ENCODE measurements at regions of chr3 and their contacts with region 1.

Region 1: DNA sequence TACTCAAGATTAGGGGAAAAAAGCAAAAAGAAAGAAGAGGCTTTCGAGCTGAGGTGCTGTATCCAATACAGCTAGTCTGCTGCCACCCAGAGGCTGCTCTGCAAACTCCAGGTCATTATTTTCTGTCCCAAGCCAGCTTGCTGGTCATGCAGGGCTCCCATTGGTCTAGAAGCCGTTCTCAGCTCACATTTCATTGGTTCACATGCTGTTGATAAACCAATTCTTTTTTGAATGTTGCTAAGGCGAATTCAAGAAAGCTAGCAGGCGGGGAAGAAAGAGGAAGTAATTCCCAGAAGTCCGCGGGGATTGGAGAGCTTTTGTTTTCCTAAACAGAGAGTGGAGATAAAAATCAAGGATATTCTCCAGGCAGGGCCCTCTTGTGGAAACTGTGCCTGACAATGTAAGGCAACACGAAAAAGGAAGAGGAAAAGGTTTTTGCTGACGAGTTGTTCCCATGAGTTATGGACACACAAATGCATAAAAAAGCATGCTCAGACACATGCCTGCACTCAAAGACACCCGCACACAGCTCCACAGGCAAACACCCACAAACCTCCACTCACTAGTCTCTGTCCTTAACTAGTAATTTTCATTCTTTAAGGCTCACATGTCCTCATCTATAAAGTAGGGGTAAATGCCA is 33.4 kb downstream of the FSTL1 start:
- DNase-seq: peak; percentile 66 to 90 (median 80)
- ATAC-seq: peak; percentile 99
- H3K4me3 ChIP-seq: peak overlapping the region; percentile 47 to 55
- H3K4me3 Mint-ChIP-seq: peak overlapping the region; percentile 84
- H3K27ac ChIP-seq: no peak overlapping the region
- H3K27ac Mint-ChIP-seq: no peak overlapping the region
- H3K4me1 ChIP-seq: no peaks in the 10 kb centered on the region
- H3K4me1 Mint-ChIP-seq: peaks cover 21% of the 10 kb centered on the region
- H3K27me3 ChIP-seq: no peaks in the 10 kb centered on the region
- H3K27me3 Mint-ChIP-seq: peaks cover 4% of the 10 kb centered on the region
- CTCF ChIP-seq: peak; percentile 87

Region 2: DNA sequence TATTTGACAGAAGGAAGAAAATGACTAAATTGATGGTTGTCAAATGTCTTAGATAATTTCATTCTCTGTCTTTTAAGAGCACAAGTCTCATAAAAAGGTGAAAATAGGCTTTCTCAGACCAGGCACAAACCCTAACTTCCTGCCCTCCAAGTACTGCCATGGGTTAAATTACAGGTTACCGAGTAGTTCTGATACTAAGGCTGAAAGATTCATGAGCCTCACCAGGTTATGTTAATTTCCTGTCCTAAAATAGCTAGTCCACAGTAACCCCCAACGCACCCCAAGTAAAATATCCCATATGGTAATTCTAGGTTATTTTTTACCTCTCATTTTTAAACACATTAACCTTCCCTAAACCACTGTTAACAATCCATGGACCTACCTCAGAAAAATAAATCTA is 365.2 kb before region 1 on chr3:
- CTCF ChIA-PET with region 1: no interaction called
- POLR2A ChIA-PET with region 1: no interaction called
- intact Hi-C with region 1: no loop called
- DNase-seq: peak in 1 of 9 experiments; percentile 12
- ATAC-seq: no peak
- H3K4me3 ChIP-seq: no peak overlapping the region
- H3K4me3 Mint-ChIP-seq: peak overlapping the region; percentile 35
- H3K27ac ChIP-seq: no peak overlapping the region
- H3K27ac Mint-ChIP-seq: peak overlapping the region; percentile 25
- H3K4me1 ChIP-seq: peaks cover 27% of the 10 kb centered on the region
- H3K4me1 Mint-ChIP-seq: peaks cover 86% of the 10 kb centered on the region
- H3K27me3 ChIP-seq: no peaks in the 10 kb centered on the region
- H3K27me3 Mint-ChIP-seq: no peaks in the 10 kb centered on the region
- CTCF ChIP-seq: no peak

Region 3: DNA sequence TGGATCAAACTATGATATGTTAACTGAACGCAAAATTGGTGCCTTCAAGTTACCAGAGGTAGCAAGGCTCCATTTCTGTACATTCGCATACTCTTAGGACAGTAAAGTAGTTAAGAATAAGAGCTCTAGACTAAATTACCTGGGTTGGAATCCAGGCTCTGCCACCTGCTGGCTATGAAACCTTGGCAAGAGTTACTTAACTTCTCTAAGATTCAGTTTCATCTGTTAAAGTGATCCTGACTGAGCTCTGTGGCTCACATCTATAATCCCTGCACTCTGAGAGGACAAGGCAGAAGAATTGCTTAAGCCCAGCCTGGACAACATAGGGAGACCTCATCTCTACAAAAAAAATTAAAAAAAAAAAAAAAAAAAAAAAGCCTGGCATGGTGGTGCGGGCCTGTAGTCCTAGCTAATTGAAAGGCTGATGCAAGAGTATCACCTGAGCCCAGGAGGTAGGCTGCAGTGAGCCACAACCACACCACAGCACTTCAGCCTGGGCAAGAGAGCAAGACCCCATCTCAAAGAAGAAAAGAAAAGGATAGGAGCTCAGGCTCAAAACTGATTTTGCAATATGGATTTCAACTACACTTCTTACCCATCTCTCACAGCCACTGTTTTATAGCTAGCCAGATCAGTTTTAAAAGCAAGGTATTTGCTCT is 344.4 kb before region 1 on chr3:
- CTCF ChIA-PET with region 1: no interaction called
- POLR2A ChIA-PET with region 1: no interaction called
- intact Hi-C with region 1: no loop called
- DNase-seq: peak in 1 of 9 experiments; percentile 11
- ATAC-seq: no peak
- H3K4me3 ChIP-seq: no peak overlapping the region
- H3K4me3 Mint-ChIP-seq: no peak overlapping the region
- H3K27ac ChIP-seq: no peak overlapping the region
- H3K27ac Mint-ChIP-seq: peak overlapping the region; percentile 27
- H3K4me1 ChIP-seq: peaks cover 28% of the 10 kb centered on the region
- H3K4me1 Mint-ChIP-seq: peaks cover 72% of the 10 kb centered on the region
- H3K27me3 ChIP-seq: no peaks in the 10 kb centered on the region
- H3K27me3 Mint-ChIP-seq: no peaks in the 10 kb centered on the region
- CTCF ChIP-seq: no peak

Region 4: DNA sequence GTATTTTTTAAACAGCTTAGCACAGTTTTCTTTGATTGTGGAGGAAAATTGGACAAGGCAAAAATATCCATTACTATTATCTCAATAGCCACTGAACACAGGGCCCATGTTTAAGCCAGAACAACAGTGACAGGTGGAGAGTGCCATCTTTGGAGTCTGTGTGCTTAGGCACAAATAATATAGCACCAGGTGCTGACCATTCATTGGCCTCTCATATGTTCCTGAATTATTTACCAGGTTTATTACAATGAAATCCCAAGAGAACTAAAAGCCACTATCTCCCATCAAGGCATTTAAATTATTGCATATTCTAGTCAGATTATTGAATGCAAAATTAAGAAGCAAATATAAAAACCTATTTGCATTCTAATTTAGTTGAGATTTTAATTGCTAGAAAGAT is 172.0 kb before region 1 on chr3:
- CTCF ChIA-PET with region 1: interaction called, 122 read pairs
- POLR2A ChIA-PET with region 1: interaction called, 9 read pairs
- intact Hi-C with region 1: loop called (anchors 1 kb)
- DNase-seq: no peak
- ATAC-seq: no peak
- H3K4me3 ChIP-seq: no peak overlapping the region
- H3K4me3 Mint-ChIP-seq: no peak overlapping the region
- H3K27ac ChIP-seq: no peak overlapping the region
- H3K27ac Mint-ChIP-seq: no peak overlapping the region
- H3K4me1 ChIP-seq: no peaks in the 10 kb centered on the region
- H3K4me1 Mint-ChIP-seq: no peaks in the 10 kb centered on the region
- H3K27me3 ChIP-seq: peaks cover 0 to 3% of the 10 kb centered on the region in 2 experiments
- H3K27me3 Mint-ChIP-seq: peaks cover 17% of the 10 kb centered on the region
- CTCF ChIP-seq: no peak

Region 5: GRCh38 chr3:120263792-120264191 is 153.6 kb before region 1 on chr3:
- CTCF ChIA-PET with region 1: no interaction called
- POLR2A ChIA-PET with region 1: no interaction called
- intact Hi-C with region 1: no loop called
- DNase-seq: no peak
- ATAC-seq: no peak
- H3K4me3 ChIP-seq: no peak overlapping the region
- H3K4me3 Mint-ChIP-seq: no peak overlapping the region
- H3K27ac ChIP-seq: no peak overlapping the region
- H3K27ac Mint-ChIP-seq: no peak overlapping the region
- H3K4me1 ChIP-seq: no peaks in the 10 kb centered on the region
- H3K4me1 Mint-ChIP-seq: no peaks in the 10 kb centered on the region
- H3K27me3 ChIP-seq: no peaks in the 10 kb centered on the region
- H3K27me3 Mint-ChIP-seq: peaks cover 27% of the 10 kb centered on the region
- CTCF ChIP-seq: no peak

Region 6: DNA sequence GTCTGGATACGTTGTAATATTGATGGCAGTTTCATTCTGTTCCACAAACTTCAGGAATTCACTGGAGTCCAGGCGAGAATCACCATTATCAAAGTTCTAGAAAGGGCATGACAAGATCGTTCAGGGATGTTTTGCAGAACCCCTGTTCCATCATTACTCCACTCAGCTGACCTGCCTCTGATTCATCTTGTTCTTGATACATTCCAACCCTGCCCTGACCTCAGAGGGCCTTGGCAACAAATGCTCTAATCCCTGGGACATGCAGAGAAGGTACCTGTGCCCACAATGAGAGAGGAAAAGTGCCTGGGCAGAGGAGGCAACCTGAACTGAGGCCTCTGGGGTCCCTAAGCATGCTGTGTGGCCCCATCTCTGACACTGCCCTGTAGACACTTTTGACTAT is 12.5 kb before region 1 on chr3:
- CTCF ChIA-PET with region 1: interaction called, 16 read pairs
- POLR2A ChIA-PET with region 1: no interaction called
- intact Hi-C with region 1: no loop called
- DNase-seq: no peak
- ATAC-seq: no peak
- H3K4me3 ChIP-seq: no peak overlapping the region
- H3K4me3 Mint-ChIP-seq: no peak overlapping the region
- H3K27ac ChIP-seq: no peak overlapping the region
- H3K27ac Mint-ChIP-seq: no peak overlapping the region
- H3K4me1 ChIP-seq: no peaks in the 10 kb centered on the region
- H3K4me1 Mint-ChIP-seq: no peaks in the 10 kb centered on the region
- H3K27me3 ChIP-seq: no peaks in the 10 kb centered on the region
- H3K27me3 Mint-ChIP-seq: no peaks in the 10 kb centered on the region
- CTCF ChIP-seq: no peak

Region 7: GRCh38 chr3:120429921-120430361 is 12.5 kb after region 1 on chr3:
- CTCF ChIA-PET with region 1: interaction called, 12 read pairs
- POLR2A ChIA-PET with region 1: no interaction called
- intact Hi-C with region 1: no loop called
- DNase-seq: no peak
- ATAC-seq: no peak
- H3K4me3 ChIP-seq: no peak overlapping the region
- H3K4me3 Mint-ChIP-seq: no peak overlapping the region
- H3K27ac ChIP-seq: no peak overlapping the region
- H3K27ac Mint-ChIP-seq: no peak overlapping the region
- H3K4me1 ChIP-seq: no peaks in the 10 kb centered on the region
- H3K4me1 Mint-ChIP-seq: no peaks in the 10 kb centered on the region
- H3K27me3 ChIP-seq: no peaks in the 10 kb centered on the region
- H3K27me3 Mint-ChIP-seq: peaks cover 11% of the 10 kb centered on the region
- CTCF ChIP-seq: no peak

Region 8: DNA sequence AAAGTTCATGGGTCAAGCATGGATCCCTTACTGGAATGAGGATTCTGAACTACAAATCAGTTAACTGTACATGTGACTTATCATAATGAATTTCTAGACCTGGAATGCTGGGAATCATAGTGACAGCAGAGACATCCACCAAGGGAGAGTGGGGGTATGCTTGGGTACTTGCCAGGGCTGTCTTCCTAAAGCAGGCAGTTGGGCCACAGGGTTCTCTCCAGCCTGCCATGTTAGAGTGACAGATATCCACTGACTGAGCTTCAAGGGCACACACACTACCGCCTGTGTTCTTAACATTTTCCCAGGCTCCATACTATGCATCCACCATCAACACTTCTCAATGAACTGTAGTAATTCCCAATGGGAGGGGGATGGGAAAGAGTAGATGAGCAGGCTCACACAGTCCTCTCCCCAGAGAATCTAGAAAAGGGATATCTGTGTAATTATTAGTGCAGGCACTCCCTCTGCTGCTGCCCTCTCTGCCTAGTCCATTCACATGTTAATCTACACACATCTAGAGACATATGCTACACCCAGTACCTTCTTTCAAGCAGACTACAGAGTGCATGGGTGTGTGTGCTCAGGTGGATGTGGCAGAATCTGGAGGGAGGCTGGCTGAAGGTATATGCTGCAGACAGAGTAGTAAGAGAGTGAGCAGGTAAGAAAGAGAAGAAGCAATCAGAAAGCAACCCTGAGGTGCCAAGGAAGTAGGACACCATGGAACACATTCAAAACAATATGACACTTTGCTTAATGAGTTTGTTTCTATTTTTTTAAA is 29.7 kb after region 1 on chr3:
- CTCF ChIA-PET with region 1: interaction called, 10 read pairs
- POLR2A ChIA-PET with region 1: no interaction called
- intact Hi-C with region 1: no loop called
- DNase-seq: no peak
- ATAC-seq: no peak
- H3K4me3 ChIP-seq: no peak overlapping the region
- H3K4me3 Mint-ChIP-seq: no peak overlapping the region
- H3K27ac ChIP-seq: no peak overlapping the region
- H3K27ac Mint-ChIP-seq: no peak overlapping the region
- H3K4me1 ChIP-seq: peaks cover 3% of the 10 kb centered on the region
- H3K4me1 Mint-ChIP-seq: peaks cover 16% of the 10 kb centered on the region
- H3K27me3 ChIP-seq: peaks cover 6 to 13% of the 10 kb centered on the region in 2 experiments
- H3K27me3 Mint-ChIP-seq: peaks cover 33% of the 10 kb centered on the region
- CTCF ChIP-seq: no peak

Region 9: GRCh38 chr3:121431726-121432517 is 1014.5 kb after region 1 on chr3:
- CTCF ChIA-PET with region 1: no interaction called
- POLR2A ChIA-PET with region 1: no interaction called
- intact Hi-C with region 1: loop called in 1 of 2 experiments (anchors 5 kb)
- DNase-seq: peak in 8 of 9 experiments; percentile 18 to 82 (median 48)
- ATAC-seq: peak; percentile 95
- H3K4me3 ChIP-seq: peak overlapping the region; percentile 26 to 39
- H3K4me3 Mint-ChIP-seq: peak overlapping the region; percentile 81
- H3K27ac ChIP-seq: peak overlapping the region; percentile 2 to 28
- H3K27ac Mint-ChIP-seq: peak overlapping the region; percentile 80
- H3K4me1 ChIP-seq: peaks cover 3% of the 10 kb centered on the region
- H3K4me1 Mint-ChIP-seq: peaks cover 14% of the 10 kb centered on the region
- H3K27me3 ChIP-seq: no peaks in the 10 kb centered on the region
- H3K27me3 Mint-ChIP-seq: no peaks in the 10 kb centered on the region
- CTCF ChIP-seq: no peak